ENCODE measurements at regions of chr19 and their contacts with region 1.

Region 1: DNA sequence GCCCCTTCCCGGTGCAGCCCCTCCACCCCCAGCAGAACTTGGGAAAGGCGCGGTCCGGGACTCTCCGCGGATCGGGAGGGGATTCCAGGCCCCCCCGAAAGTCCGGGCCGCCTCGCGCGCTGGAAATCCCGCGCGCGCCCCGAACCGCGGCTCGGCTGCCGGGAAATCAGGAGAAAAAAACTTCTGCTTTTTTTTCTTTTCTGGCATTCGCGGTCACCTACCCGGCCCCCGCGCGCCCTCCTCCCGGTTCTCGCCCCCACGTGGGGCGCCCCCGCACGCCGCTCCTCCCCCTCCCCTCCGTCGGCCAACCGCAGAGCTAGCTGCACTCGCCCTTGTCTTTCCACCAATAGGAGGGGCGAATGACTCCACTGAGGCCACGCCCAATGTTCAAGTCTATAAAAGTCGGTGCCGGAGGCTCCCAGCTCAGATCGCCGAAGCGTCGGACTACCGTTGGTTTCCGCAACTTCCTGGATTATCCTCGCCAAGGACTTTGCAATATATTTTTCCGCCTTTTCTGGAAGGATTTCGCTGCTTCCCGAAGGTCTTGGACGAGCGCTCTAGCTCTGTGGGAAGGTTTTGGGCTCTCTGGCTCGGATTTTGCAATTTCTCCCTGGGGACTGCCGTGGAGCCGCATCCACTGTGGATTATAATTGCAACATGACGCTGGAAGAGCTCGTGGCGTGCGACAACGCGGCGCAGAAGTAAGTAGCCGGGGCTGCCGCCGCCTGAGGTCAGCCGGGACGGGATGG is at the start of gene GADD45B:
- DNase-seq: peak; percentile 98
- H3K4me3 ChIP-seq: peak within 1 kb of the TSS; percentile 68 to 99 (median 98)
- H3K27ac ChIP-seq: peak within 1 kb of the TSS; percentile 55 to 95 (median 92)
- H3K4me1 ChIP-seq: peaks cover 13 to 64% (median 48%) of the 10 kb centered on the region in 6 donors
- H3K27me3 ChIP-seq: no peaks in the 10 kb centered on the region
- CTCF ChIP-seq: peak in 3 of 11 experiments; percentile 12 to 40 (median 24)
- POLR2A ChIP-seq: peak; percentile 99 to 100 (median 100)
- total RNA-seq, gene GADD45B: 57.4 to 114 (median 77.4) TPM

Region 2: GRCh38 chr19:2391118-2391725 is 84.7 kb before region 1 on chr19:
- intact Hi-C with region 1: no loop called
- DNase-seq: no peak
- H3K4me3 ChIP-seq: no peak overlapping the region
- H3K27ac ChIP-seq: no peak overlapping the region
- H3K4me1 ChIP-seq: peaks cover 0 to 36% (median 15%) of the 10 kb centered on the region in 6 donors
- H3K27me3 ChIP-seq: no peaks in the 10 kb centered on the region
- CTCF ChIP-seq: peak; percentile 61 to 90 (median 84)
- POLR2A ChIP-seq: no peak

Region 3: GRCh38 chr19:2613507-2614295 is 137.8 kb after region 1 on chr19:
- intact Hi-C with region 1: loop called (anchors 2 kb)
- DNase-seq: peak; percentile 91
- H3K4me3 ChIP-seq: peak overlapping the region in 1 of 8 donors; percentile 12
- H3K27ac ChIP-seq: peak overlapping the region in 6 of 8 donors; percentile 22 to 97 (median 66)
- H3K4me1 ChIP-seq: peaks cover 48 to 100% (median 91%) of the 10 kb centered on the region in 6 donors
- H3K27me3 ChIP-seq: no peaks in the 10 kb centered on the region
- CTCF ChIP-seq: peak; percentile 52 to 96 (median 87)
- POLR2A ChIP-seq: no peak

Region 4: DNA sequence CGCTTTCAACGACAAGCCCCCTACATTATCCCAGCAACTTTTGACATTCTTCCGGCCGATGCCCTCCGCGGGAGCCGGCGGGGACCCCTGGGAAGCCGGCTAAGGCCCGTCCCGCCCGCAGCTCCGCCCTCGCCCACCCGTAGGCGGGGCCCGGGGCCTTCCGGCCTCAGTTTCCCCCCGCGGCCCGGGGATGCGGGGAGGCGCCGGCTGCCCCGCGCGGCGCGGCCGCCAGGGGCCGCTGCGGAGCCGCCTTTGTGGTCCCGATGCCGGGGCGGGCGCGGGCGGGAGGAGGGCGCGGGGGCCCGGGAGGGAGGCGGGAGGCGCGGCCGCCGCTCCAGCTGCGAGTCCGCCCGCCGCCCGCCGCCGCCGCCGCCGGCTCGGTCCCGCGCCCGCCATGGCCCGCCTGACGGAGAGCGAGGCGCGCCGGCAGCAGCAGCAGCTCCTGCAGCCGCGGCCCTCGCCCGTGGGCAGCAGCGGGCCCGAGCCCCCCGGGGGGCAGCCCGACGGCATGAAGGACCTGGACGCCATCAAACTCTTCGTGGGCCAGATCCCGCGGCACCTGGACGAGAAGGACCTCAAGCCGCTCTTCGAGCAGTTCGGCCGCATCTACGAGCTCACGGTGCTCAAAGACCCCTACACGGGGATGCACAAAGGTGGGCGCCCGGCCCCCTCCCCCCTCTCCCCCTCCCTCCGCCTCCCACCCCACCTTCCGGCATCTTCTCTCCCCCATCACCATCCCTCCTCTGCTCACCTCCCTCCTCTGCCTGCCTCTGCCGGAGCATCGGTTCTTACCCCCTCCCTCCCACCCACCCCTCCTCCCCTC is 748.7 kb after region 1 on chr19 and contains the start of gene CELF5:
- intact Hi-C with region 1: no loop called
- DNase-seq: no peak
- H3K4me3 ChIP-seq: peak within 1 kb of the TSS in 4 of 8 donors; percentile 26 to 66 (median 28)
- H3K27ac ChIP-seq: no peak within 1 kb of the TSS
- H3K4me1 ChIP-seq: peaks cover 0 to 16% (median 5%) of the 10 kb centered on the region in 6 donors
- H3K27me3 ChIP-seq: peaks cover 0 to 84% (median 53%) of the 10 kb centered on the region in 7 donors
- CTCF ChIP-seq: peak in 6 of 11 experiments; percentile 49 to 78 (median 70)
- POLR2A ChIP-seq: no peak
- total RNA-seq, gene CELF5: 0.10 to 0.19 TPM in 2 of 7 donors, not detected in the others